ENCODE measurements at regions of chr11 and their contacts with region 1.

Region 1: DNA sequence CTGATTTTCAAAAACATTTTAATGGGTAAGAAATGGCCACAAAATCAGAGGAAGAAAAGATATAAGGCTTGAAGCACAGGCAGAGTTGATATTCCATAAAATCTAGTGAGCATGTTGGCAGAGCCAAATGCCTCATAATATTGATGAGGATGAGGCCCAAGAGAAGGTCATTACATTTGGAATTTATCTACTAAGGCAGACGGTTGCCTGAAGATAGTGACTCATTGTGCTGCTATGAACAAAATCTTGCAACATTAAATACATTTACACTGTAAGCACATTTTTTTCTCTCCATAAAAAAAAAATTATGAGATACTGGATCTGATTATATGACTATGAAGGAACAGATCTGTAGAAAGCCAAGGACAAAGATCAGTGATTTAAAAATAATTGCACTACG is 881.4 kb upstream of the CHORDC1 start:
- DNase-seq: peak; percentile 15 to 75
- H3K4me3 ChIP-seq: no peak overlapping the region
- H3K27ac ChIP-seq: peak overlapping the region; percentile 18; the same call in 1 of the 2 replicates
- H3K4me1 ChIP-seq: peaks cover 22% of the 10 kb centered on the region
- H3K27me3 ChIP-seq: no peaks in the 10 kb centered on the region
- CTCF ChIP-seq: no peak

Region 2: GRCh38 chr11:90803378-90803777 is 300.9 kb before region 1 on chr11:
- CTCF ChIA-PET with region 1: no interaction called
- POLR2A ChIA-PET with region 1: no interaction called
- intact Hi-C with region 1: loop called (anchors 10 kb)
- DNase-seq: peak; percentile 23 to 76
- H3K4me3 ChIP-seq: no peak overlapping the region
- H3K27ac ChIP-seq: peak overlapping the region; percentile 38; the same call in 1 of the 2 replicates
- H3K4me1 ChIP-seq: peaks cover 28% of the 10 kb centered on the region
- H3K27me3 ChIP-seq: no peaks in the 10 kb centered on the region
- CTCF ChIP-seq: no peak

Region 3: GRCh38 chr11:91163619-91164451 is 59.6 kb after region 1 on chr11:
- CTCF ChIA-PET with region 1: no interaction called
- POLR2A ChIA-PET with region 1: no interaction called
- intact Hi-C with region 1: loop called (anchors 2 kb)
- DNase-seq: peak in 1 of 2 experiments; percentile 17
- H3K4me3 ChIP-seq: no peak overlapping the region
- H3K27ac ChIP-seq: no peak overlapping the region
- H3K4me1 ChIP-seq: peaks cover 21% of the 10 kb centered on the region
- H3K27me3 ChIP-seq: no peaks in the 10 kb centered on the region
- CTCF ChIP-seq: no peak